IMR-90 (cell line): ENCODE measurements at regions of chr9 and their contacts with region 1.

Region 1: GRCh38 chr9:106862825-106863720 is at the start of gene ZNF462:
- DNase-seq: peak; percentile 79
- ATAC-seq: peak; percentile 43
- H3K4me3 ChIP-seq: peak within 1 kb of the TSS; percentile 68
- H3K27ac ChIP-seq: peak within 1 kb of the TSS; percentile 89
- H3K4me1 ChIP-seq: no peaks in the 10 kb centered on the region
- H3K27me3 ChIP-seq: peaks cover 9% of the 10 kb centered on the region
- CTCF ChIP-seq: peak; percentile 32; the same call in 1 of the 2 replicates
- POLR2A ChIP-seq: peak; percentile 16; the same call in 1 of the 2 replicates
- RAD21 ChIP-seq: peak; percentile 26
- total RNA-seq, gene ZNF462: 16.1 and 18.8 TPM in 2 replicates

Region 2: DNA sequence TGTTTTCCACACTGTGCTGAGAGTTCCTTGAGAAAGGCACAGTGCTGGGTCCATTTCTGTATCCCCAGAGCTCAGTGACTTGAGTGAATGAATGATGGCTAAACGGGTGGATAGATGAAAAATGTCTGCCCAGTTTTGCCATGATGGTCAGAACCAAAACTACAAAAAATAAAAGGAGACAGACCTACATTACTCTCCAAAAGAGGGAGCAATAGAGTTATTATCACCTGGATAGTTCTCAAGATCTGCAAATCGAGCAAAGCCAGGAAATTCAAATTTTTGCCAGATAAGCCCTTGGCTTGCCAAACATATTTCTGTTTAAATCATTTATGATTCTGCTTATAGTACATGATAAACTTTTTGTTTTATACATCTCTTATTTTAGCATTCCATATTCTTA is 214.3 kb before region 1 on chr9:
- CTCF ChIA-PET with region 1: no interaction called
- POLR2A ChIA-PET with region 1: no interaction called
- dilution Hi-C with region 1: no loop called
- in situ Hi-C with region 1: no loop called
- intact Hi-C with region 1: loop called (anchors 2 kb)
- DNase-seq: peak; percentile 13
- ATAC-seq: no peak
- H3K4me3 ChIP-seq: no peak overlapping the region
- H3K27ac ChIP-seq: no peak overlapping the region
- H3K4me1 ChIP-seq: no peaks in the 10 kb centered on the region
- H3K27me3 ChIP-seq: no peaks in the 10 kb centered on the region
- CTCF ChIP-seq: peak; percentile 36
- POLR2A ChIP-seq: no peak
- RAD21 ChIP-seq: peak; percentile 36

Region 3: GRCh38 chr9:106717686-106718085 is 145.4 kb before region 1 on chr9:
- CTCF ChIA-PET with region 1: no interaction called
- POLR2A ChIA-PET with region 1: no interaction called
- dilution Hi-C with region 1: no loop called
- in situ Hi-C with region 1: no loop called
- intact Hi-C with region 1: loop called (anchors 5 kb)
- DNase-seq: peak; percentile 80
- ATAC-seq: peak; percentile 86
- H3K4me3 ChIP-seq: no peak overlapping the region
- H3K27ac ChIP-seq: peak overlapping the region; percentile 64; the same call in 1 of the 2 replicates
- H3K4me1 ChIP-seq: no peaks in the 10 kb centered on the region
- H3K27me3 ChIP-seq: no peaks in the 10 kb centered on the region
- CTCF ChIP-seq: no peak
- POLR2A ChIP-seq: no peak
- RAD21 ChIP-seq: no peak

Region 4: GRCh38 chr9:106892632-106893031 is 29.6 kb after region 1 on chr9:
- CTCF ChIA-PET with region 1: no interaction called
- POLR2A ChIA-PET with region 1: no interaction called
- dilution Hi-C with region 1: no loop called
- in situ Hi-C with region 1: no loop called
- intact Hi-C with region 1: loop called (anchors 2 kb)
- DNase-seq: peak; percentile 98
- ATAC-seq: peak; percentile 96
- H3K4me3 ChIP-seq: no peak overlapping the region
- H3K27ac ChIP-seq: no peak overlapping the region
- H3K4me1 ChIP-seq: peaks cover 6% of the 10 kb centered on the region
- H3K27me3 ChIP-seq: no peaks in the 10 kb centered on the region
- CTCF ChIP-seq: no peak
- POLR2A ChIP-seq: no peak
- RAD21 ChIP-seq: no peak; the same call in 1 of the 2 replicates

Region 5: DNA sequence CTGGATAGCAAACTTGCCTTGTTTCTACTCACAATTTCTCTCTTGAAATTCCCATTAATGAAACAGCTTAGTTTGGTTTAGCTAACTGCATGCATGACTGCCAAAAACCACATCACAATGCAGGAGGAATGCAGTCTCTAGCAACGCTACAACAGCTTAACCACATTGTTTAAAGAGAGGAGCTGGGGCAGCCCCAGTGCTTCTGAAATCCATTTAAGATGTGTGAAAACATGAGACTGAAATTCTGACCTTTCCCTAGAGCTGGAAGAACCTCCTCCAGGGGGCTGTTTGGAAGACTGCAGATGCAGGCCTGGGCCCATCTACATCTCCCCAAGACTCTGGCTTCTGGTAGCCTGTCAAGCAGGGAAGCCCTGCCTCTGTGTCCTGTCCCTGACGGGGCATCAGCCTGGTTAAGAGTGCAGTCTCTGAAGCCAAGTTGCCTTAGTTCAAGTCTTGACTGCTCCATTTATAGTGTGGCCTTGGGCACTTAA is 157.0 kb after region 1 on chr9:
- CTCF ChIA-PET with region 1: interaction called, 3 read pairs
- POLR2A ChIA-PET with region 1: interaction called, 7 read pairs
- dilution Hi-C with region 1: no loop called
- in situ Hi-C with region 1: no loop called
- intact Hi-C with region 1: loop called (anchors 2 kb)
- DNase-seq: peak; percentile 96
- ATAC-seq: peak; percentile 96
- H3K4me3 ChIP-seq: no peak overlapping the region
- H3K27ac ChIP-seq: no peak overlapping the region
- H3K4me1 ChIP-seq: peaks cover 5% of the 10 kb centered on the region
- H3K27me3 ChIP-seq: peaks cover 64% of the 10 kb centered on the region
- CTCF ChIP-seq: no peak
- POLR2A ChIP-seq: no peak
- RAD21 ChIP-seq: no peak; the same call in 1 of the 2 replicates

Region 6: GRCh38 chr9:107172160-107172978 is 309.3 kb after region 1 on chr9:
- CTCF ChIA-PET with region 1: no interaction called
- POLR2A ChIA-PET with region 1: no interaction called
- dilution Hi-C with region 1: no loop called
- in situ Hi-C with region 1: no loop called
- intact Hi-C with region 1: loop called (anchors 5 kb)
- DNase-seq: peak; percentile 78
- ATAC-seq: peak; percentile 93
- H3K4me3 ChIP-seq: no peak overlapping the region
- H3K27ac ChIP-seq: no peak overlapping the region
- H3K4me1 ChIP-seq: peaks cover 2% of the 10 kb centered on the region; the same call in 1 of the 2 replicates
- H3K27me3 ChIP-seq: peaks cover 2% of the 10 kb centered on the region; the same call in 1 of the 2 replicates
- CTCF ChIP-seq: peak; percentile 85
- POLR2A ChIP-seq: no peak
- RAD21 ChIP-seq: peak; percentile 92